MCF 10A (cell line): ENCODE measurements at regions of chr1 and their contacts with region 1.

Region 1: GRCh38 chr1:228082135-228082891 is at the start of gene ARF1:
- DNase-seq: peak; percentile 98
- H3K4me3 Mint-ChIP-seq: peak within 1 kb of the TSS; percentile 98
- H3K27ac Mint-ChIP-seq: peak within 1 kb of the TSS; percentile 97
- H3K4me1 Mint-ChIP-seq: peaks cover 49% of the 10 kb centered on the region
- H3K27me3 Mint-ChIP-seq: no peaks in the 10 kb centered on the region
- CTCF ChIP-seq: no peak
- total RNA-seq, gene ARF1: 870 and 1,140 TPM in 2 replicates

Region 2: GRCh38 chr1:227805606-227806197 is 276.6 kb before region 1 on chr1:
- CTCF ChIA-PET with region 1: interaction called, 5 read pairs
- POLR2A ChIA-PET with region 1: interaction called, 11 read pairs
- intact Hi-C with region 1: no loop called
- DNase-seq: peak; percentile 100
- H3K4me3 Mint-ChIP-seq: no peak overlapping the region
- H3K27ac Mint-ChIP-seq: peak overlapping the region; percentile 93
- H3K4me1 Mint-ChIP-seq: peaks cover 27% of the 10 kb centered on the region
- H3K27me3 Mint-ChIP-seq: no peaks in the 10 kb centered on the region
- CTCF ChIP-seq: peak; percentile 36

Region 3: DNA sequence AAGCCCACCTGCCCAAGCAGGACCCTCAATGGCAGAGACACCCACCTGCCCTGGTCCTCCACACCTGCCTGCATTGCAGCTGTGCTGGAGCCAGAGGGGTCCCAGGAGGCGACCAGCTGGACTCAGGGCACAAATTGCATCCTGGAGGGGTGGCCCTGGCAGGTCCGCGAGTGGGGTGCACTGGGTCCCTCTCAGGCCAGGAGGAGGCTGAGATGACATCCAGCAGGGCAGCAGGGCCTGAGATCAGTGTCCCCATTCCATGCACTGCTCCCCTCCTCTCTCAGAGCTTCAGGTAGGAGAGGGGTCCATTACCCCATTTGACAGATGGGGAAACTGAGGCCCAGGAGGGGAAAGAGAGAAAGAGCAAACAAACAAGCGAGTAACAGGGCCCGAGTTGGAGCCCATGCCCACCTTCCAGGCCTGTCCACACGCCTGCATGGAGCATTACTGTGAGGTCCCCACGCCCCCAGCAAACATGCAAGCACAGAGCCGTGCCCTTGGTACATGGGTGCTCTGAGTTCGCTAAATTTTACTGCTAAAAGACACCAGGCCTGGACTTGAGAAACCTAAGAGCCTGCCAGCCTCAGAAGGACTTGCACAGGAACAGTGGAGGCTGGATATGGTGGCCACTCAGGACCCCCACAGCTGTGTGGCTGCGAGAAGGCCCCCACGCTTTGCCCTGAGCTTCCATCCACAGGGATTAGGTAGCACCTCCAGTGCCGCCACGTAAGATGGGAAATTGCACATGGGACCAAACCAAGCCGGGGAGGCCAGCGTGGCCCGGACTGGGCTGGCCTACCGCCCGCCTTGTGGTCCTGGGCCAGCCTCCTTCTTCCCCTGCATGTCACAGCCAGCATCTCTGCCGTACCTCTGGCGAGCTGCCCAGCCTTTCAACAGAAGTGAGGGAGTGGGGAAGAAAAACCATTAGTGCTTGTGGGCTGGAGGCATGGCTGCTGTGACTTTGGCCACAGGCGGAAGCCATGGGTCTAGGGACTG is 68.1 kb before region 1 on chr1:
- CTCF ChIA-PET with region 1: interaction called, 7 read pairs
- POLR2A ChIA-PET with region 1: interaction called, 93 read pairs
- intact Hi-C with region 1: no loop called
- DNase-seq: peak; percentile 99
- H3K4me3 Mint-ChIP-seq: no peak overlapping the region
- H3K27ac Mint-ChIP-seq: peak overlapping the region; percentile 69
- H3K4me1 Mint-ChIP-seq: peaks cover 14% of the 10 kb centered on the region
- H3K27me3 Mint-ChIP-seq: no peaks in the 10 kb centered on the region
- CTCF ChIP-seq: no peak

Region 4: DNA sequence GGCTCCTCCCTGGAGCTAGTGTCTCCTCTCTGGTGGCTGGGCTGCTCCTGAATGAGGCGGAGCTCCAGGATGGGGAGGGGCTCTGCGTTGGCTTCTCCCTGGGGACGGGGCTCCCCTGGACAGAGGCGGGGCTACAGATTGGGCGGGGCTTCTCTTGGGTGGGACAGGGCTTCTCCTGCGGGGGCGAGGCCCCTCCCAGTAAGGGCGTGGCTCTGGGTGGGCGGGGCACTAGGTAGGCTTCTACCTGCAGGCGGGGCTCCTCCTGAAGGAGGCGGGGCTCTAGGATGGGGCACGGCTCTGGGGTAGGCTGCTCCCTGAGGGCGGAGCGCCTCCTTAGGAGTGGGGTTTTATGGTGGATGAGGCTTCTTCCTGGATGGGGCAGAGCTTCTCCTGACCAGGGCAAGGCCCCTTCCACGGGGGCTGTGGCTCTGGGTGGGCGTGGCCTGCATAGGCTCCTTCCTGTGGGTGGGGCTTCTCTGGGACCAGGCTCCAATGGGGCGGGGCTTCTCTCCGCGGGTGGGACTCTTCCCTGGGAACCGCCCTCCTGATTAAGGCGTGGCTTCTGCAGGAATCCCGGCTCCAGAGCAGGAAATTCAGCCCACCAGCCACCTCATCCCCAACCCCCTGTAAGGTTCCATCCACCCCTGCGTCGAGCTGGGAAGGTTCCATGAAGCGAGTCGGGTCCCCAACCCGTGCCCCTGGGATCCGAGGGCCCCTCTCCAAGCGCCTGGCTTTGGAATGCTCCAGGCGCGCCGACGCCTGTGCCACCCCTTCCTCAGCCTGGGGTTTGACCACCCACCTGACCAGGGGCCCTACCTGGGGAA is 22.5 kb before region 1 on chr1:
- CTCF ChIA-PET with region 1: interaction called, 3 read pairs
- POLR2A ChIA-PET with region 1: interaction called, 16 read pairs
- intact Hi-C with region 1: no loop called
- DNase-seq: peak; percentile 52
- H3K4me3 Mint-ChIP-seq: no peak overlapping the region
- H3K27ac Mint-ChIP-seq: no peak overlapping the region
- H3K4me1 Mint-ChIP-seq: no peaks in the 10 kb centered on the region
- H3K27me3 Mint-ChIP-seq: peaks cover 38% of the 10 kb centered on the region
- CTCF ChIP-seq: no peak

Region 5: DNA sequence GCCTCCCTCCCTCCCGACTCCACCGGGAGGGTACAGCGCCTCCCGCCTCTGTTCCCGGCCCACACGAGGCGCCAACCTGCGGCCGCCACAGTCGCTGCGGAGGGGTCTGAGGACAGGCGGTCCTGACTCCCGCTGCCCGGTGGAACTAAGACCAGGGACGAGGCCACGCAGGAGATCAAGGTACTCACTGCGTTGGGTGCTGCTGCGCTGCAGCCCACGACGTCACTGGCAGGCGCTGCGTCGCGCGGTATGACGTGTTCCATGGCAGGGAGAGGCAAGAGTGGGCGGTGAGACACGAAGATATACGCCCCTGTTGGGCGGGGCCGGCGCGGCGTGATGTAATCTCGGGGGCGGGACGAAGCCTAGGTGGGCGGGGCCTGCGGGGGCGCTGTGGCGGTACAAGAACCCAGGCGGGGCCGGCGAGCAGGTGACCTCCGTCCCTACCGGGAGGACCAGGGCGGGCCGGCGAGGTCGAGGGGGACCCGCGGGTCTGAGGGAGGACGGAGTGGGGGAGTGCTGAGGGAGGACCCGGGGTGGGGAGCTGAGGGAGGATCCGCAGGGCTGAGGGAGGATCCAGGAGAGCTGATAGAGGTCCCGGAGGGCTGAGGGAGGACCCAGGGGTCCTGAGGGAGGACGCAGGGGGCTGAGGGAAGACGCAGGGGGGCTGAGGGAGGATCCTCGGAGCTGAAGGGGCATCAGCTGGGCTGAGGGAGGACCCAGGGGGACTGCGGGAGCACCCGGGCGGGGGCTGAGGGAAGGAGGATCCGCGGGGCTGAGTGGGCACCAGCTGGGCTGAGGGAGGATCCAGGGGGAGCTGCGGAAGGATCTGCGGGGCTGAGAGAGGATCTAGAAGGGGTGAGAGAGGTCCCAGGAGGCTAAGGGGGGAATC is 27.0 kb after region 1 on chr1 and contains the start of gene MRPL55:
- CTCF ChIA-PET with region 1: interaction called, 8 read pairs
- POLR2A ChIA-PET with region 1: interaction called, 128 read pairs
- intact Hi-C with region 1: no loop called
- DNase-seq: peak; percentile 99
- H3K4me3 Mint-ChIP-seq: peak within 1 kb of the TSS; percentile 95
- H3K27ac Mint-ChIP-seq: peak within 1 kb of the TSS; percentile 92
- H3K4me1 Mint-ChIP-seq: peaks cover 12% of the 10 kb centered on the region
- H3K27me3 Mint-ChIP-seq: no peaks in the 10 kb centered on the region
- CTCF ChIP-seq: no peak
- total RNA-seq, gene MRPL55: 85.4 and 111 TPM in 2 replicates

Region 6: DNA sequence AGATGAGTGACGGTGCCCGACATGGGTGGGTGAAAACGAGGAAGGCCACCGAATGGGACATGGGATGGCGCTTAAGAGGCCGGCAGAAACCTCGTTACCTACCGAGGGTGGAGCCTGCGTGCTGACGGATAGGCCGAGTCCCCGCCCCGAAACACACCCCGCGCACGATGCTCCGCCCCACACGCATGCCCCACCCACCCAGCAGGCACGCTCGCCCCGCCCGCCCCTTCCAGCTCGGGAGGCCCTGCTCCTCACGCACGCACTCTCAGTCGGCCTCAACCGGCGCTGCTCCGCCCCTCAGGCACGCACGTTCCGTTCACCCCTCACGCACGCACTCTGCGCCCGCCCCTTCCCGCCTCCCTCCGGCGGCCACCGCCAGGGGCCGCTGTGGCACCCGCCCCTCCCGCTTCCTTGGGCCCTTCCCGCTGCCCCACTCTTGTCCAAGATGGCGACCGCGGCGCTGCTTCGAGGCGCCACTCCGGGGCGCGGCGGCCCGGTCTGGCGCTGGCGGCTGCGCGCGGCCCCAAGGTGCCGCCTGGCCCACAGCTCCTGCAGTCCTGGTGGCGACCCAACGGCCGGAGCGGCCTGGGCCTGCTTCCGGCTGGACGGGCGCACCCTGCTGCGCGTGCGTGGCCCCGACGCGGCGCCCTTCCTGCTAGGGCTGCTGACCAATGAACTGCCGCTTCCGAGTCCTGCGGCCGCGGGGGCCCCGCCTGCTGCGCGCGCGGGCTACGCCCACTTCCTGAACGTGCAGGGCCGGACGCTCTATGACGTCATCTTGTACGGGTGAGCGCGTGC is 83.3 kb after region 1 on chr1 and contains the start of gene IBA57:
- CTCF ChIA-PET with region 1: interaction called, 12 read pairs
- POLR2A ChIA-PET with region 1: interaction called, 51 read pairs
- intact Hi-C with region 1: no loop called
- DNase-seq: peak; percentile 100
- H3K4me3 Mint-ChIP-seq: peak within 1 kb of the TSS; percentile 70
- H3K27ac Mint-ChIP-seq: peak within 1 kb of the TSS; percentile 86
- H3K4me1 Mint-ChIP-seq: peaks cover 46% of the 10 kb centered on the region
- H3K27me3 Mint-ChIP-seq: no peaks in the 10 kb centered on the region
- CTCF ChIP-seq: peak; percentile 99
- total RNA-seq, gene IBA57: 12.0 and 16.5 TPM in 2 replicates

Region 7: GRCh38 chr1:228275739-228276421 is 193.6 kb after region 1 on chr1:
- CTCF ChIA-PET with region 1: no interaction called
- POLR2A ChIA-PET with region 1: no interaction called
- intact Hi-C with region 1: no loop called
- DNase-seq: peak; percentile 77
- H3K4me3 Mint-ChIP-seq: peak overlapping the region; percentile 64
- H3K27ac Mint-ChIP-seq: no peak overlapping the region
- H3K4me1 Mint-ChIP-seq: no peaks in the 10 kb centered on the region
- H3K27me3 Mint-ChIP-seq: no peaks in the 10 kb centered on the region
- CTCF ChIP-seq: no peak